ENCODE measurements at regions of chr5 and their contacts with region 1.

Region 1: DNA sequence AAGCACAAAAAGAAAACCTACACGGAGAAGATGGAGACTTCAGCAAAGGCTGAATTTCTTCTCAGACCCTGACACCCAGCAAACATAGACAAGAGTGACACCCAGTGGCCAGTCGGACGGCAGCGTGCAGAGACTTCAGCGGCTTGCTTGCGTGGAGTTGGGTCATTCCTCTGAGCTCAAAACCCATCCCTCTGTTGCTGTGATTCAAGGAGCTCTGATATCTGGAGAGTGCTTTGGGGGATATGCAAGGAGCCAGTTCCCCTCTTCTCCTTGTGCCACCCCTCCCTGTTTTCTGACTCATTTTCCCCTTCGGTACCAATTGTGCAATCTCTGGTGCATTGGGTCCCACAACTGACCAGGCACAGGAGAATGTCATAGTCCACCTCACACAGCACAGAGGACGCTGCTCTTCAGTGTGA is 27.5 kb downstream of the SH3TC2 start:
- DNase-seq: peak; percentile 38 to 64
- ATAC-seq: peak; percentile 73 to 88
- H3K4me3 ChIP-seq: no peak overlapping the region
- H3K27ac ChIP-seq: no peak overlapping the region
- H3K4me1 ChIP-seq: peaks cover 0 to 9% of the 10 kb centered on the region in 2 donors
- H3K27me3 ChIP-seq: no peaks in the 10 kb centered on the region
- CTCF ChIP-seq: peak; percentile 76 to 92 (median 81)
- POLR2A ChIP-seq: no peak

Region 2: DNA sequence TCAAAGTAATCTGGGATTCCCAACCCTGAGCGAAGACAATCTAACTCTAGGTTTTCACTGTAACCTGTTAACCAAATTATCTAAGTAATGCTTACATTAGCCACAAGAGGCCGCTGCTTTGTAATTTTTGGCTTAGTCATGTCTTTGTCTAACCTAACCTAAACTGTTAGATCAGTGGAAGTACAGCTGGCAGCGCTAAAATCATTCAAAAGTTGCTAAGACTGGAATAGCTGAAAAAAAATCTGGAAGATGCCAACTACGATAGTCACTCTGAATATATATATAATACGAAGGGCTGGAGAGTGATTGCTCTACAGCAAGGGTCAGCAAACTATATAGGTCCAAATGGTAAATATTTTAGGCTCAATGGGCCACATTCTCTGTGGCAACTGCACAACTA is 591.4 kb before region 1 on chr5:
- in situ Hi-C with region 1: loop called in 3 of 4 experiments (anchors 25 kb)
- intact Hi-C with region 1: loop called (anchors 10 kb)
- DNase-seq: peak in 1 of 2 donors; percentile 7
- ATAC-seq: peak; percentile 83 to 91
- H3K4me3 ChIP-seq: no peak overlapping the region
- H3K27ac ChIP-seq: no peak overlapping the region
- H3K4me1 ChIP-seq: no peaks in the 10 kb centered on the region
- H3K27me3 ChIP-seq: no peaks in the 10 kb centered on the region
- CTCF ChIP-seq: peak; percentile 57 to 77 (median 72)
- POLR2A ChIP-seq: no peak

Region 3: DNA sequence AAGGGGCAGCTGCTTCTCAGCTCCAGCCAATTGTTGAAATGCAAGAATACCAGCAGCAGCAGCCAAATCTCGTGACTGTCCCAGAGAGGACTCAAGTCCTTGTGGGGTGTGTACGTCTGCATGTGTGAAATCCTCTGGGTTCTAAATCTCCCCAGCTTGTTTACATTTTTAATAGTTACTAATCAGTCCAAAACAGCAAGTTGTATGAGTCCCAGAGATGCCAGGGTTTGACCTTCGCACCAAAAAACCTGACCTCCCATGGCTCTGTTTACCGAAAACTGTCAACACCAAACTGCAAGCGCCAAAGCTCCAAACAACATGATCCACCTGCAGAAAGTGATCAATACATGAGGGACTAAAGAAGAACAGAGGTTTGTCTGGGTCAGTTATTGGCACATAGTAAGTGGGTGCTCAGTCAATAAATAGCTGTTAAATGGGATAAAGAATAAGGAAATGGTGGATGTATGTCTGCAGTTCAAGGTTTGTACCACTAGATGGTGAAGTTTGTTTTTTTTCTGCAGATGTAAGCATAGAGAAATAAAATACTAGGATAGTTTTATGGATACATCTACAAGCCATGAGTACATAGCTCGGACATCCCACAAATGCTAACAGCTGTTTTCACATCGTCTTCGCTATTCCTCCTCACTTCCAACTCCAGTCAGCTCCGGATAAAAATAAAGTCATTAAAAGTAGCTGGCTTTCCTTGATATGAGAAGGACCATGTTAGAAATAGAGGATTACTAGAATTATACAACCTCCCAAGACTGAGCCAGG is 294.2 kb before region 1 on chr5:
- in situ Hi-C with region 1: loop called (anchors 5 to 10 kb)
- intact Hi-C with region 1: no loop called
- DNase-seq: peak; percentile 73 to 77
- ATAC-seq: peak; percentile 95 to 97
- H3K4me3 ChIP-seq: peak overlapping the region in 3 of 4 donors; percentile 14 to 21 (median 15)
- H3K27ac ChIP-seq: peak overlapping the region; percentile 65 to 77 (median 73)
- H3K4me1 ChIP-seq: peaks cover 9 to 20% of the 10 kb centered on the region in 2 donors
- H3K27me3 ChIP-seq: no peaks in the 10 kb centered on the region
- CTCF ChIP-seq: peak; percentile 81 to 85 (median 83)
- POLR2A ChIP-seq: no peak

Region 4: DNA sequence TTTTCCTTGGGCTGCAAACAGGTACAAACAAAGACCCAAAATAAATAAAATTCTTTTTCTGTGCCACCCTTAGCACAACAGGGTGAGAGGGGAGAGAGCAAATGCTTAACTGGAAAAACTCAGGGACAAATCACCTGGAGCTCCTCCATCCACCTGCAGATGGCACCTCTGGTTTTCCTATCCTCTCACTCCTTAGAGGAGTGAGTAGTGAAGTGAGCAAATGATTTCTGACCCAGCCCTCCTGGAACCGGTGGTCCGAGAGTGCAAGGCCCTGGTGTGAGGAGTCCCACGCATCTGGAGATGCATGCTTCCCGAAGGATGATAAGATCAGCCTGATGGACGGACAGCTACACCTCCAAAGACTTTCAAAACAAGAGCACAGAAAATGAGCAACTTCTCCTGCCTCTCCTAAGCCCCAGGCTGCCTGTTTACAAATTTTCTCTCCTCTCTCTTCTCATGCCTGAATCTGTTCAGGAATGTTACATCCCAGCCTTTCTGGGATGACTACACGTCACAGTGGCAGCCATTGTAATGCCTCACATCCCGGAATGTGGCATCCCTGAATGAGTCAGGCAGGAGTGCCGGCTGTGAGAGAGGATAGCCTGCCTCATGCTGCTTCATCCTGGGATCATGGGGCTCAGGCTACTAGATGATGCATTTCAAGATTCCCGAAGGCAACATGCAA is 122.5 kb before region 1 on chr5:
- in situ Hi-C with region 1: no loop called
- intact Hi-C with region 1: loop called (anchors 2 kb)
- DNase-seq: no peak
- ATAC-seq: peak; percentile 41 to 53
- H3K4me3 ChIP-seq: no peak overlapping the region
- H3K27ac ChIP-seq: no peak overlapping the region
- H3K4me1 ChIP-seq: peaks cover 17 to 18% of the 10 kb centered on the region in 2 donors
- H3K27me3 ChIP-seq: no peaks in the 10 kb centered on the region
- CTCF ChIP-seq: peak; percentile 16 to 58 (median 38)
- POLR2A ChIP-seq: no peak

Region 5: GRCh38 chr5:149228618-149229297 is 193.4 kb after region 1 on chr5:
- in situ Hi-C with region 1: no loop called
- intact Hi-C with region 1: loop called (anchors 10 kb)
- DNase-seq: peak; percentile 53 to 69
- ATAC-seq: peak; percentile 99
- H3K4me3 ChIP-seq: no peak overlapping the region
- H3K27ac ChIP-seq: peak overlapping the region; percentile 17 to 70 (median 52)
- H3K4me1 ChIP-seq: peaks cover 14 to 17% of the 10 kb centered on the region in 2 donors
- H3K27me3 ChIP-seq: no peaks in the 10 kb centered on the region
- CTCF ChIP-seq: peak; percentile 75 to 92 (median 82)
- POLR2A ChIP-seq: no peak

Measured in gastrocnemius medialis (tissue), 4 donors.